ENCODE measurements at regions of chr4 and their contacts with region 1.

Region 1: DNA sequence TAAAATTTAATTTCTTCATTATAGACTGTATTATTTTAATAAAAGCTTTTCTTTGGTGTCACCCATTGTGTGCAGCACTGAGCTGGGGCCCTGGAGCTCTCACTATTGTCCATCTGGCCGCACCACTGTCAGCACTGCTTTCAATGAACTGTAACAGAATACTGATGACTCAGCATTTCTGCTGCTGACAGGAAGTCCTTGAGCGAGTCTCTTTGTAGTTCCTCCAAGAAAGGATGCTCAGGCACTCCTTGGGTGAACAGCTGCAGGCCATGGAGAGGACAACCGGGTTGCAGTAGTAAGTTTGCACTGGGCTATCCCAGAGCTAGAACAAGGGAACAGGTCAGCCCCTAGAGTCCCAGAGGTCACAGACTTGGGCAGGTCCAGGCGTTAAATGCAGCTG is 81.6 kb downstream of the SORBS2 start:
- DNase-seq: no peak

Region 2: DNA sequence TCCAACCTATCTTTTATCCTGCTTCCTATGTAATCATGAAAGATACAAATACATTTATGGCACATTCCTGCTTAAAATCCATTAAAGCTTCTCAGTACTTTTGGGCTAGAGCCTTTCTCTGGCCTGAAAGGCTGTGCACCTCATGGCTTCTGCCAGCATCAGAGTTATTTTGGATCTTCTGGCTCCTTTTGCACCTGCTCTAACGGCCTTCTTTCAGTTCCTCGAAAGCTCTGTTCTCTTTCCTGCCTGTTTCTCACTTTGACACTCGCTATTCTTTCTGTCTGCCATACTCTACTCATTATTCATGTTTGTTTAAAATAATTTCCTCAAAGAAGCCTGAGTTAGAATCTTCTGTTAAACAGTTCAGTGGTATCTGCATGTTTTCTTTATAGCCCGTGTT is 420.6 kb before region 1 on chr4:
- intact Hi-C with region 1: no loop called
- DNase-seq: no peak

Region 3: GRCh38 chr4:185672618-185673017 is 57.8 kb before region 1 on chr4:
- intact Hi-C with region 1: loop called in 1 of 2 experiments (anchors 10 kb)
- DNase-seq: no peak

Region 4: DNA sequence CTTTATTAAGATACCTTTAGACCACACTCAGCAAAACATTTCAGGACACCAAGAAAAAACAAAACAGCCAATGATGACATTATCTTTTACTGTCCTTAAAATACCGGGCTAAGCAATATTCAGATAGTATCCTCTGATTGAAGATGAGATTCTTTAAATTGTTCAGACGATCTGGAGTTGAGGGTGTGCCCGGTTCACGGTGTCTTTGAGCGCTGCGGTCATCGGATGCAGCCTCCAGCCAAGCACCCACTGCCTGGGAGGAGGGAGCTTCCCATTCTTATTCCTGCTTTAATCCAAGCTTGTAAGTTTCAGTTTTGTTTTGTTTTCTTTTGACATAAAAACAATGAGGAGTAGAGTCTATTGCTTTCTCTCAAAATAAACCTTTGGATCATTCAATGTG is 388.2 kb after region 1 on chr4:
- intact Hi-C with region 1: no loop called
- DNase-seq: no peak

Region 5: DNA sequence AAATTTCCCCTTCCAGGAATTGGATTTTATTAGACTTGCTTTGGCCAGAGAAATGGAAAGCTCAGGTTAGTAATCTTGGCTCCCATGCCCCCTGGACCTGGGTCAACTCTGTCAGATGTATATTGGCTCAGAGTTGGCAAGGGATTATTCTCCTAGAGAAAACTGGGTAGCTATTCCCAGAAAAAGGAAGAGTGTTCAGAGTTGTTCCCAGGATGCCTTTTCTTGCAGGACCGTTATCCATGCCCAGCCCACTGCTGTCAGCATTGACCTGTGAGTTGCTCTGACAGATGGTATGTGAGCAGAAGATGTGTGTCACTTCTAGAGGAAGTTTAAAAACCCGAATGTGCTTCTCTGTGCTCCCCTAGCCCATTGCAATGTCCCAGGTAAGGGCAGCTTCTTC is 1755.3 kb after region 1 on chr4:
- intact Hi-C with region 1: no loop called
- DNase-seq: no peak